ENCODE measurements at regions of chr3 and their contacts with region 1.

Region 1: DNA sequence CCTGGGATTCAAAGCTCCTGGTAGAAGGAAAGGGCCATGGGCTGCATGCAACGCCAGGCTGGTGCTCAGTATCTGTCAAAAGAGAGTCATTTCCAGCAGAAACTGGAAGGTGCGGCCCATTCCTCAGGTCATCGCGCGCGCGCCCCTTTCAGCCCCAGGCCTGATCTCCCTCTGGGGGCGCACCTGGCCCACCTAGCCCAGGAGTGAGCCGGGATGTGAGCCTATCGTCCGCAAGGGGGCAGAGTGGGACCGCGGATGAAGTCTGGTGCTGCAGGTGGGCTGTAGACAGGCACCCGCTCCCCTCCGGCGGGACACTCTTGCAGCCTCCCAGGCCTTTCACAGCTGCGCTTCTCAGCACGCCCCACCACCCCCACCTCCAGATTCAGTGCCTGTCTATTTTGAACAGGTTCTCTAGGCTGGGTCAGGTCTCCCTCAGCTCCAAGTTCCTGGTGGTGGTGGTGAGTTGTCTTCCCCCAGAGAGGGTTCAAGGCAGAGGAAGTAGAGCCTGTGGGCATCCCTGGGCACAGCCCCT is 5.8 kb upstream of the RPL29 start:
- DNase-seq: peak; percentile 76 to 80
- ATAC-seq: peak; percentile 37 to 72 (median 62)
- H3K4me3 ChIP-seq: no peak overlapping the region
- H3K27ac ChIP-seq: no peak overlapping the region
- H3K4me1 ChIP-seq: peaks cover 22 to 36% (median 29%) of the 10 kb centered on the region in 9 donors
- H3K27me3 ChIP-seq: no peaks in the 10 kb centered on the region
- CTCF ChIP-seq: peak; percentile 76 to 96 (median 90)

Region 2: DNA sequence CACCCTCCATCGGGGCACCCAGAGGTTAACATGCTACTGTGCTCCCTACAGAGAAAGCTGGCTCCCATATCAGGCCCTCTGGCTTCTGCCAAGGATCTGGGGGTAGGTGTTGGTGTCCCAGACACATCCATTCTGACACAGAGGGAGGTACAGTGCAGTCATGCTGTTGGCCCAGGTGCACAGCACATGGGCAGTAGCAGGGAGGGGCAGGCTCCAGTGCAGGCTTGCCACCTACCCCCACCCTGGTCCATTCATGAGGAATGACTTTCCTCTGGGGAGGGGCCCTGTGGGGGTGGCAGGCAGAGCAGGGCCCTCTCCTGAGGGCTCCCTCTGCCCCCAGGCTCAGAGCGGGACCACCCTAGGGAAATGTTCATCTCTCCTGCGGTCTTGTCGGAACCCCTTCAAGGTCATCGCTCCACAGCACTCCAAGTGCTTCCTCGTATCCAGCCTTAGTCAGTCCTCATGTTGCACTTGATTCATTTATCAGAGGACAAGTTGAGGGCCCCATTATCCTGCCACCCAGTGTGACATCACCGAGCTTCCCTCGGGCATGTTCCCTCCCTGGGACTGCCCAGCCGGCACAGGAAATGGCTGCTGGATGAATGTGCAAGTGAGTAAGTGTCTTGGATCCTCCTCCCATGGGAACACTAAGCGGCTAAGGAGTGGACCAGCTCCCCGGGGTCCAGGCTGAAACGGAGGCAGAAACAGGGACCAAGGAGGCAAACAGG is 44.8 kb after region 1 on chr3:
- intact Hi-C with region 1: loop called in 3 of 10 experiments (anchors 5 kb)
- DNase-seq: peak in 1 of 2 donors; percentile 29
- ATAC-seq: peak; percentile 25 to 79 (median 58)
- H3K4me3 ChIP-seq: no peak overlapping the region
- H3K27ac ChIP-seq: peak overlapping the region; percentile 18 to 83 (median 66)
- H3K4me1 ChIP-seq: peaks cover 24 to 65% (median 58%) of the 10 kb centered on the region in 9 donors
- H3K27me3 ChIP-seq: no peaks in the 10 kb centered on the region
- CTCF ChIP-seq: no peak

Region 3: GRCh38 chr3:52056968-52057805 is 55.7 kb after region 1 on chr3:
- intact Hi-C with region 1: loop called in 8 of 10 experiments (anchors 1 to 5 kb)
- DNase-seq: peak; percentile 99 to 100
- ATAC-seq: peak; percentile 88 to 93 (median 90)
- H3K4me3 ChIP-seq: peak overlapping the region; percentile 61 to 93 (median 70)
- H3K27ac ChIP-seq: peak overlapping the region; percentile 4 to 97 (median 90)
- H3K4me1 ChIP-seq: peaks cover 7 to 58% (median 40%) of the 10 kb centered on the region in 9 donors
- H3K27me3 ChIP-seq: no peaks in the 10 kb centered on the region
- CTCF ChIP-seq: peak in 3 of 9 donors; percentile 23 to 40 (median 33)

Region 4: DNA sequence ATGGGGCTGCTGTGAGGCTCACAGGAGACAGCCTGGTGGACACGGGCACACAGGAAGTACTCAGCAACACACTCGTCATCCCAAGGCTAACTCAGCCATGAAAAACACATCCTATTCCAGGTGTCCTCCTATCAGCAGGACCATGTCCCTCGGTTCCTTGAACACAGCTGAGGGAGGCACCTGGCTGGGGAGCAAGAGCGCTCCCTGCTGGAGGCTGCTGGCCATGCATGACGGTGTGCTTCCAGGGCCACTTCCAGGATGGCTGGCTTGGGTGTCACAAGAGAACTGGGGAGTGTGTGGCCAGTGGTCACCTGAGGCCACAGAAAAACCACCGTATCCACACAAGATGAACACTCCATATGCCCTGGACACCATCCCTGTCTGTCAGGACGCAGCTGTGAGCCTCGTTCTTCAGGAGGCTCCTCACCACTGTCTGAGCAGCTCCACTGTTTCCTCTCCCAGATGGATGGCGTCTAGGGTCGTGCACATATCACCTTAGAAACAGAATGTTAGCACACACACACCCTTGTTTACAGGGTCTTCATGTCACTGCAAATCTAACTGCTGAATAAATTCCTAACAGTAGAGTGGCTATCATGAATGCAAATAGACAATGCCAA is 121.7 kb after region 1 on chr3:
- intact Hi-C with region 1: loop called (anchors 1 to 5 kb)
- DNase-seq: peak; percentile 77 to 83
- ATAC-seq: peak; percentile 69 to 89 (median 84)
- H3K4me3 ChIP-seq: no peak overlapping the region
- H3K27ac ChIP-seq: peak overlapping the region in 9 of 10 donors; percentile 41 to 91 (median 86)
- H3K4me1 ChIP-seq: peaks cover 15 to 50% (median 34%) of the 10 kb centered on the region in 9 donors
- H3K27me3 ChIP-seq: no peaks in the 10 kb centered on the region
- CTCF ChIP-seq: peak; percentile 93 to 99 (median 97)

Region 5: GRCh38 chr3:52144034-52144795 is 142.7 kb after region 1 on chr3:
- intact Hi-C with region 1: loop called (anchors 1 to 5 kb)
- DNase-seq: peak; percentile 79 to 88
- ATAC-seq: peak; percentile 67 to 89 (median 81)
- H3K4me3 ChIP-seq: no peak overlapping the region
- H3K27ac ChIP-seq: no peak overlapping the region
- H3K4me1 ChIP-seq: peaks cover 0 to 21% (median 4%) of the 10 kb centered on the region in 9 donors
- H3K27me3 ChIP-seq: no peaks in the 10 kb centered on the region
- CTCF ChIP-seq: peak; percentile 96 to 99 (median 97)

Region 6: DNA sequence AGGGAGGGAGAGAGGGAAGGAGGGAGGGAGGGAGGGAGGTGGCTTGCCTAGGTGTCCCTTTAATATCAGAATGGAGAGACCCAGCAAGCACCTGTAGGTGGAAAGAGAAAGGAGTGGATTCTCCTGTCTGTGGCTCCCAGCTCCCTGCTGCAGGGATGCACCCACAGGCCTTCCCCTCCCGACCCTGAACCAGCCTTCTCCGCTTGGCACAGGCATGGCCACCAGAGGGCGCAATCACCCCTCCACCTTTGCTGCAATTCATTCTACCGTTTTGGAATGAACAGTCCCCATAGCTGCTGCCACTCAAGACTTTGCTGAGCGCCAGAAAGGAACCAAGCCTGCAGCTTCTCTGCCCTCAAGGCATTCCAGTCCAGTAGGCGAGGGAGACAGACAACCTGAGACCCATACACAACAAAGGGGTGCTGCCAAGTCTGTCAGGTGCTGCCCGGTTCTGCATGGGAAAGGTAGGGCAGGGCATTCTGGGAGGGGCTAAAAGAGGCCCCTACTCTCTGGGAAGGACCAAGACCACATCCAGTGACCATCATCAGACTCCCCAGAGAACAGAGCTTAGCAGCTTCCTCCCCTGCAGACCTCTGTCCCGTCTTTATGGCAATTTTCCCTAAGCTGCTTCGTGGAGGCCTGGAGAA is 219.0 kb after region 1 on chr3:
- intact Hi-C with region 1: loop called in 3 of 10 experiments (anchors 10 kb)
- DNase-seq: peak; percentile 87 to 88
- ATAC-seq: peak; percentile 50 to 65 (median 56)
- H3K4me3 ChIP-seq: no peak overlapping the region
- H3K27ac ChIP-seq: peak overlapping the region in 3 of 10 donors; percentile 13 to 24 (median 21)
- H3K4me1 ChIP-seq: peaks cover 17 to 68% (median 62%) of the 10 kb centered on the region in 9 donors
- H3K27me3 ChIP-seq: no peaks in the 10 kb centered on the region
- CTCF ChIP-seq: peak; percentile 87 to 94 (median 92)

Region 7: GRCh38 chr3:52339612-52340011 is 338.1 kb after region 1 on chr3:
- intact Hi-C with region 1: loop called in 5 of 10 experiments (anchors 5 kb)
- DNase-seq: peak in 1 of 2 donors; percentile 58
- ATAC-seq: peak in 5 of 8 donors; percentile 37 to 54 (median 47)
- H3K4me3 ChIP-seq: no peak overlapping the region
- H3K27ac ChIP-seq: no peak overlapping the region
- H3K4me1 ChIP-seq: no peaks in the 10 kb centered on the region
- H3K27me3 ChIP-seq: no peaks in the 10 kb centered on the region
- CTCF ChIP-seq: peak; percentile 35 to 83 (median 77)

Measured in heart right ventricle (tissue), 16 donors.